Activated naive CD4-positive, alpha-beta T cell treated with anti-CD3 and anti-CD28 coated beads for 36 hours (primary cell): ENCODE measurements at regions of chr6 and their contacts with region 1.

Region 1: GRCh38 chr6:88982720-88983119 is 19.3 kb upstream of the RNGTT start:
- DNase-seq: peak; percentile 37
- H3K4me3 Mint-ChIP-seq: no peak overlapping the region
- H3K27ac Mint-ChIP-seq: no peak overlapping the region
- H3K4me1 Mint-ChIP-seq: no peaks in the 10 kb centered on the region
- H3K27me3 Mint-ChIP-seq: no peaks in the 10 kb centered on the region

Region 2: DNA sequence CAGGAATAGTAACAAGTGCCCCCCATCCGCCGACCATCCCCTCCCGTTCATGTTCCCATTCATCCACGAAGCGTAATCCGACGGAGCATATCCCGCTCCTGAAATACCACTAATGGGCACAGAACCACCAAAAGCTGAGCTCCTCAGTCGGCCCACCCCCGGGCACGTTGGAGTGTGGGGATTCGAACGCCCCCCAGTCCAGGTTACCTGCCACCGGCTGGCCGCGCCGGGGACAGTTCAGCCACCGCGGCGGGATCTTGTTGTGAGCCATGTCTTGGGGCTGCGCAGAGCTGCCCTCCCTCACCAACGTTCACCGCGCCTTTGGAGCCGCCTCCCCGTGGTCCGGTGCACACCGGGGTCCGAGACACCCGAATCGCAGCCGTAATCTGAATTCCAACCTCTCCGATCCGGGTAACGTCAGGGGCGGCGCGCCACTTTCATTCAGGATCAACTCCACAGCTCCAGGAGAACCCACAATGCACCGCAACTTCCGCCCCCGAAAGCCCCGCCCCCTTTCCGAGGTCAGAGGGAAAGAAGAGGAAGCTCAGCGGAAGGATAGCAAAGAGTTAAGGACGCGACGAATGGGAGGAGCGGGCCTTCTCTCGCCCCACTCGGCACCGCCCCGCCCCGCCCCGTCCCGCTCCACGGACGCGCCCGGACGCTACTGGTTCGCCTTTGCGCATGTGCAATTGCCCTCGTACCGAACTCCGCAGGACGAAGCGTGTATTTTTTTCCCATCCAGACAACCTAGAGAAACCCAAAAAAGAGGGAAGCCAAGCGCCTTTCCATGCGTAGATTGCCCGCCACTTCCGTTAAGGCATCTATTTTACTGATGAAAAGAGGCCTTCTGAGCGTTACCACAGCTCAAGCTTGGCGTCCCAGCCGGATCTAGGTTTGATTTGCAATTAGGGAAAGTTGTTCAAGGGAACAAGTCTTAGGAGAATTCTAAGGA is 19.3 kb before region 1 on chr6 and contains the start of gene RNGTT:
- CTCF ChIA-PET with region 1: interaction called, 6 read pairs
- intact Hi-C with region 1: loop called (anchors 1 kb)
- DNase-seq: peak; percentile 99
- H3K4me3 Mint-ChIP-seq: peak within 1 kb of the TSS; percentile 99
- H3K27ac Mint-ChIP-seq: peak within 1 kb of the TSS; percentile 87
- H3K4me1 Mint-ChIP-seq: peaks cover 34% of the 10 kb centered on the region
- H3K27me3 Mint-ChIP-seq: no peaks in the 10 kb centered on the region
- total RNA-seq, gene RNGTT: 21.7 to 23.5 TPM

Region 3: GRCh38 chr6:89117211-89118108 is 134.7 kb after region 1 on chr6 and contains the start of gene SRSF12:
- CTCF ChIA-PET with region 1: interaction called, 13 read pairs
- intact Hi-C with region 1: loop called (anchors 1 kb)
- DNase-seq: peak; percentile 37
- H3K4me3 Mint-ChIP-seq: peak within 1 kb of the TSS; percentile 78
- H3K27ac Mint-ChIP-seq: no peak within 1 kb of the TSS
- H3K4me1 Mint-ChIP-seq: peaks cover 5% of the 10 kb centered on the region
- H3K27me3 Mint-ChIP-seq: peaks cover 5% of the 10 kb centered on the region
- total RNA-seq, gene SRSF12: 0.15 TPM in 1 of 2 experiments, not detected in the other

Region 4: GRCh38 chr6:89145787-89146646 is 163.3 kb after region 1 on chr6 and contains the start of gene PM20D2:
- CTCF ChIA-PET with region 1: interaction called, 16 read pairs
- intact Hi-C with region 1: loop called (anchors 1 kb)
- DNase-seq: peak; percentile 59
- H3K4me3 Mint-ChIP-seq: peak within 1 kb of the TSS; percentile 90
- H3K27ac Mint-ChIP-seq: peak within 1 kb of the TSS; percentile 96
- H3K4me1 Mint-ChIP-seq: peaks cover 27% of the 10 kb centered on the region
- H3K27me3 Mint-ChIP-seq: no peaks in the 10 kb centered on the region
- total RNA-seq, gene PM20D2: 11.6 to 12.7 TPM

Region 5: DNA sequence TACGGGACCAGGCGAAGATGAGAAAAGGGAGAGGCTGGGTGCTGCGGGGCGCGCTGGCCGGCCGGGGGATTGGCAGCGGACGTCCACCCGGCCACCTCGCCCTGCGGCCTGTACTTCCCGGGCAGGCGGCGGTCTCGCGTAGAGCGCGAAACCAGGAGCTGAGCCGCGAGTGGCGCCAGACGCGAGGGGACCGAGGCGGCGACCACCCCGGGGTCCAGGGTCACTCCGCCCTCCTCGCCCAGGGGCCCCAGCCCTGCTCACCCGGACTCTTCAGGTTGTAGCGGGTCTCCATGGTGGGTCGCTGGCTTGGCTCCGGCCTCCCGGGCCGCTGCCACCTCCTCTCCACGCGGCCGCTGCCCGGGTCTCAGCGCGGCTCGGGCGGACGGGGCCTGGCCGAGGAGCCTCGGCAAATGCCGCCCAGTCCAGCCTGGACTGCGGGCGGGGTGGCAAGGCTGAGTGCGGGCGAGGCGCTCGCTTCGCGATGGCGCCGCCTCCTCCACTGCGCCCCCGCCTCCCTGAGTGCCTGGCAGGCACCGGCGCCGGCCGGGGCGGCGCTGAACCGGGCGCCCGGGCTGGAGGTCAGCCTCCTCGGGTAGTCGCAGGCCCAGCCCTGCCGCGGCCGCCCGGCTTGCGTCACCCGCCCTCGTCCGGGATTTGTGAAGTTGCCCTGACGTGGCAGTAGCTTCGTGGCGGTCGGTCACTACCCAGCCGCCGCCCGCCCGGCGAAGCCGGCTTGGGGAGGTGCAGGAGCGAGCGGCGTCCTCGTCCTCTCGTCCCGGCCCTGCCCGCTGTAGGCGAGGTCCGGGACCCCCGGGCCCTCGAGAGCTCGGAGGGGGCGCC is 369.8 kb after region 1 on chr6 and contains the start of gene UBE2J1:
- CTCF ChIA-PET with region 1: interaction called, 3 read pairs
- intact Hi-C with region 1: loop called (anchors 5 kb)
- DNase-seq: peak; percentile 71
- H3K4me3 Mint-ChIP-seq: peak within 1 kb of the TSS; percentile 90
- H3K27ac Mint-ChIP-seq: peak within 1 kb of the TSS; percentile 84
- H3K4me1 Mint-ChIP-seq: peaks cover 66% of the 10 kb centered on the region
- H3K27me3 Mint-ChIP-seq: no peaks in the 10 kb centered on the region
- total RNA-seq, gene UBE2J1: 10.8 to 10.9 TPM